Dorsolateral prefrontal cortex (tissue), 120 donors: ENCODE measurements at regions of chr17 and their contacts with region 1.

Region 1: GRCh38 chr17:21318439-21318838 is 33.9 kb downstream of the MAP2K3 start:
- DNase-seq: peak in 3 of 10 donors; percentile 33 to 45 (median 38)
- H3K4me3 ChIP-seq: no peak overlapping the region
- H3K27ac ChIP-seq: no peak overlapping the region
- H3K27me3 ChIP-seq: no peaks in the 10 kb centered on the region
- CTCF ChIP-seq: no peak

Region 2: DNA sequence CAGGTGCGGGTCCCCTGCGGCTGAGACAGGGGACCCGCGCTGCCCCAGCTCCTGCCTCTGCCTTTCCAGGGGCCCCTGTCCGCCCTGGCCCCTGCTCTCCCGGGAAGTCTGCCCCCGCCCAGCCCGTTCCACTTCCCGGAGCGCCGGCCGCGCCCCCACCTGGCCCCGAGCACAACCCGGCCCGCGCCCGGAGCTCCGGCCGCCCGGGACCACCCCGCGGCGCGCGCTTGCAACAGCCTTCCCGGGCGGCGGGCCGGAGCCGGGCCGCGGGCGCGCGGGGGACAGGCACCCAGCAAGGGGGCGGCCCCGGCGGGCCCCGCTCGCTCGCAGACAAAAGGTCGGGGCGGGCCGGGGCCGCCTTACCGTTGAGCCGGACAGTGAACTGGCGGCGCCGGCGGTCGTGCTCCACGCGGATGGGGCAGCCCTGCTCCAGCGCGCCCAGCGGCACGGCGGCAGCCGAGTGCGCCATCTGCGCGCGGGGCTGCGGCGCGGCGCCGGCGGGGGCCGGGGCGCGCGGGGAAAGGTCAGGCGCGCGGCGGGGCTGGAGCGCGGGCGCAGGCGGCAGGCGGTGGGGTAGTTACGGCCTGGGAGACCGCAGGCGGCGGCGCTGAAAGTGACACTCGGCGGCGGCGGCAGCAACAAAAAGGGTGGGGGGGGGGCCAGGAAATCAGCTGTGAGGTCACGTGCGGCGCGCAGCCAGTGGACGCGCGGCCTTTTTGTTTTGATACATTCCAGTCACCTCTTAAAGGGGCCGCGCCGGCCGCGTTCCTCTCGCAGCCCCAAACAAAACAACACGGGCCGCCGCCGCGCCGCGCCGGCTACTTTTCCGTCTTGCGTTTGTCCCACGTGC is 65.4 kb before region 1 on chr17 and contains the start of gene NATD1:
- intact Hi-C with region 1: no loop called
- DNase-seq: peak; percentile 78 to 92 (median 87)
- H3K4me3 ChIP-seq: peak within 1 kb of the TSS; percentile 50 to 85 (median 67)
- H3K27ac ChIP-seq: peak within 1 kb of the TSS in 54 of 59 donors; percentile 9 to 92 (median 76)
- H3K27me3 ChIP-seq: no peaks in the 10 kb centered on the region
- CTCF ChIP-seq: peak in 20 of 56 donors; percentile 7 to 56 (median 27)
- total RNA-seq, gene NATD1: 5.2 to 13.5 (median 7.6) TPM

Region 3: GRCh38 chr17:21284319-21285163 is 33.9 kb before region 1 on chr17 and contains the start of gene MAP2K3:
- intact Hi-C with region 1: loop called (anchors 2 to 5 kb)
- DNase-seq: peak; percentile 97 to 100 (median 100)
- H3K4me3 ChIP-seq: peak within 1 kb of the TSS; percentile 55 to 99 (median 91)
- H3K27ac ChIP-seq: peak within 1 kb of the TSS in 57 of 59 donors; percentile 11 to 94 (median 83)
- H3K27me3 ChIP-seq: no peaks in the 10 kb centered on the region
- CTCF ChIP-seq: peak in 16 of 56 donors; percentile 7 to 45 (median 30)
- total RNA-seq, gene MAP2K3: 9.6 to 38.2 (median 18.5) TPM

Region 4: DNA sequence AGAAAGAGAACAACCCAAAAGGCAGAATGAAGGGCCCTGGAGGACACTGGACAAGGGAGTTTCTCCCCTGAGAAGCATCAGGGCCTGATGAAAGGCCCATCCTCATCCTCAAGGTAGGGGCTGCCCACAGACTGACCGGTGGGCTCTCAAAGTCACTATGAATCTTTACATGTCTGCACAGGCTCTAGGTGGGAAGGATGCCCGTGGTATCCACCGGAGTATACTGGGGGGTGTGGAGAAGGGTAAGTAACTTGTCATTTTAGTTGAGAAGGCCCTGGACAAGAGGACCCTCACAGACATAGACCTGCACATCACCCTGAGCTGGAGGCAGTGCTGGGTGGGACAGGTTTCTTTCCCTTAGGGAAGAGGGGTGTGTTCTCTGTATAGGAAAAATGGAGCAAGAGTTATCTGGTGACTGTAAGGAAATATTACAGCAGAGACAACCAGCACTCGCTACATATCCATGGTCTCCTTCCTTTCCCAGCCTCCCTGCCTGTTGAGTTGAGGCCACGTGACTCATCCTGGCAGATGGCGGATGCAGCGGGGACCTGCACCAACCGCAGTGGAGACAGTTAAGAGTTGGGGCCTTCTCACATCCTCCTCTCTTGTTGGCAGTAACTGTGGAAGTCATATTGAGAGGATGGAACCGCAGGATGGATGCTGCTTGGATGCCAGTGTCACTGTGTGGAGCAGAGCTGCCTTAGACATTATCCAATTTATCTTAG is 12.2 kb after region 1 on chr17:
- intact Hi-C with region 1: no loop called
- DNase-seq: peak in 2 of 10 donors; percentile 12 to 32
- H3K4me3 ChIP-seq: no peak overlapping the region
- H3K27ac ChIP-seq: no peak overlapping the region
- H3K27me3 ChIP-seq: no peaks in the 10 kb centered on the region
- CTCF ChIP-seq: no peak

Region 5: DNA sequence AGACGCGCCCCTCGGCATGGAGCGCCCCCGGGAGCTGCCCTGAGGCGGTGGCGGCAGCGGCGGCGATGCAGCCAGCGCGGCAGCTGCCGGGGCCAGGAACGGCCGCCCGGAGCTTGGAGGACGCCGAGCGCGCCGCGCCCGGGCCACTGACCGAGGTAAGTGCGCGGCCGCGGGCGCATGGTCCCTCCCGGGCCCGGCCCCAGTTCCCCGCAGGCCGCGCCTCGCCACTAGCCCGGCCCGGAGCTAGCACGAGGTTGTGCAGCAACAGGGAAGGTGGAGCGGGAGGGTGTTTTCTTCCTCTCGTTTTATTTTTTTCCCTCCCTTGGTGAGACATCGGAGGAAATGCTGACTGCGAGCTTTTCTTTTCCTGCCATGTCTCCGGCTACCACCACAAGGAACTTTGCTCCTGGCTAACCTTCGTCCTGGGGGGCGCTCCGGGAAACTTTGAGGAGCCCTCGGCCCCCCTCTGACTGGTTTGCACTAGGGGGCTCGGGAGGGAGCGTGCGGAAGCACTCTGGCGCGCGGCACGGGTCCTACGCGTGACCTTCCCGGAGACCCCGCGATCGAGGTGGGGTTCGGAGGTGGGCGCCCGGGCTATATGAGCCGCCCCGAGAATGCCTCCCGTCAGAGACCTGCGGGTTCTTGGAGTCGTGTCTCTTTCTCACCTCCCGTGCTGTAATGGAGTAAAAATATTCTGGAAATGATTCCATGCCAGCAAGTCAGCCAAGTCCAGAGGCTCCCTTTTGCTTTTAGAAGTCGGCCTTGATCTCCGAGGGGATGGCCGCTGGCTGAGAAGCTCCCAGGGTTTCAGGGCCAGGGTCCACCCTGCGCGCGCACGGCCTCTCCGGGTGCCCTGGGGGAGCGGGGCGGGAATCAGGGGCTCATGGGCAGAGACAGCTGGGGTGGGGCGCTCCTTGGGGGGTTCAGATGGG is 58.6 kb after region 1 on chr17:
- intact Hi-C with region 1: loop called in 1 of 2 experiments (anchors 10 kb)
- DNase-seq: no peak
- H3K4me3 ChIP-seq: peak overlapping the region; percentile 25 to 71 (median 56)
- H3K27ac ChIP-seq: peak overlapping the region in 18 of 59 donors; percentile 7 to 88 (median 48)
- H3K27me3 ChIP-seq: peaks cover 0 to 50% (median 21%) of the 10 kb centered on the region in 45 donors
- CTCF ChIP-seq: no peak

Region 6: DNA sequence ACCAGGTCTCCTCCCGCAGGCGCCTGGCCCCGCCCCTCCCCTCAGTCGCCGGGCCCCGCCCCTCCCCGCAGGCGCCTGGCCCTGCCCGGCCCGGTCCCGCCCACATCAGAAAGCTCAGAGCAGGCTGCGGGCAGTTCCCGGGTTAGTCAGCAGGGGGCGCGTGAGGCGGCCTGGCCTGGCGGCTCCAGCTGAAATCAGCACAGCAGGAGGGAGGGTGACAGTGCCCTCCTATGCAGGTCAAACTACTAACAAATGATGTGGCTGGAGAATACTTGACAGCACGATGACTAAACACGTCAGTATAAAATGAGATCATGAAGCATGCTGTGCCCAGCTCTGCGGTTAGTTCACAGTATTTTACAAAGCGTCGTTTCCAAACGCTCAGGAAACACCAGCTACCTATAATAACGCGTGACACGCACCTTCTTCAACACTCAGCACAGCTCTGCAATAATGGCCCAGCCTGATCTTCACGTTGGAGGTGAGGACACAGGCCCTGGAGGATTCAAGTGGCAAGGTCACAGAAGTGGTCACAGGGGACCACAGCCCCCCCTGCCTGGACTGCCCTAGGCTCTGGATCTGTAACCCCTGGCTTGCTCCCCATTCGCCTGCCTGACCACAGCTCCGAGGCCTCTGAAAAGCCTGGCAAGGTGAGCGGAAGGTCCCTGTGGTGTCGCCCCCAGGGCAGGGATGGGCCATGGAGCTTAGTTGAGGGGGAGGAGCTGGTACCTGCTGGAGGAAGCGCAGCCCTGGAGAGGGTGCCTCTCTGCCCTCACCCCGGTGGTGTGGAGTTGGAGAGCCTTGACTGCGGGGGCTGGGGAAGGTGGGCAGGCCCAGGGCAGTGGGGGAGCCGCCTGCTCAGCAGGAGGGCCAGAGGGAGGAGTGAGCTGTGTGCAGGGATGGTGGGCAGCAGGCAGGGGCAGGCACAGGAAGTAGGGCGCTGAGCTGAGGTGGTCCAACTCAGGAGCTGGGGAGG is 138.9 kb after region 1 on chr17:
- intact Hi-C with region 1: loop called (anchors 10 kb)
- DNase-seq: peak; percentile 71 to 88 (median 80)
- H3K4me3 ChIP-seq: peak overlapping the region in 5 of 59 donors; percentile 1 to 12 (median 6)
- H3K27ac ChIP-seq: no peak overlapping the region
- H3K27me3 ChIP-seq: no peaks in the 10 kb centered on the region
- CTCF ChIP-seq: peak; percentile 67 to 97 (median 90)

Region 7: DNA sequence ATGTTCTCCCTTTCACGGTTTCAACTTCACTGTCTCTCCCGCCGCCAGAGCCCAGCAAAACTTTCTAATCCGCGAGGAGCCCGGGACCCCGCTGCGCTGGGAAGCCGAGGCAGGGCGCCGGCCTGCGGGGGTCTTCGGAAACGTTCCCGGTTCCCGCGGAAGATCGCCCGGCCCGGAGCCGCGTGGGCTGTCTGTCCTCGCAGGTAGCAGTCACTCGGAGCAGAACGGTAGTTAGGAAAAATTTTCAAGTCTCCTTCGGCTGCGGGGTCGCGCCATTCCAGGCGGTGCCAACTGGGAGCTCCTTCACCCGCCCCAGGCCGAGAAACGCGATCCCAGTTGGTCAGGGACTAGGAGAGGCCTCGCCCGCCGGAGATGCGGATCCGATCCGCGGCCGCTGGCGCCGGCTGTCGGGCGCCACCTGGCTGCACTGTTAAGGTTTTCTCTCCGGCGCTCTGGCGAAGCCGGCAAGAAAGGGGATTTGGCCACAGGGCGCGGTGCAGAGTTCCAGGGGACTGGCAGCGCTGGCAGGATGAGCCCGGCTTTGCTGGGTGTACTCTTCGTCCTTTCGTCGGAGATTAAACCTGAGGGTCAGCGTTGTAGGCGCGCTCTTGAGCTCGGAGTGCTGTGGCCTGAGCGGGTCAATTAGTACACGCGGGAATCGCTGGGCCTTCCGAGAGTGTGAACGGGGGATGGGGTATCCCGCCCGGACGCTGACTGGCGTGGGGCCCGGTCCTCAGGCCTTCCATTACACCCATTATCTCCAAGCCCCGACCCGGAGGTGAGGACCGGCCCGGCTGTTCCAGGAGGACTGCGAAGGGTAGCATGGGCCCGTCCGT is 193.1 kb after region 1 on chr17:
- intact Hi-C with region 1: loop called in 1 of 2 experiments (anchors 10 kb)
- DNase-seq: peak; percentile 69 to 89 (median 82)
- H3K4me3 ChIP-seq: peak overlapping the region; percentile 36 to 88 (median 67)
- H3K27ac ChIP-seq: peak overlapping the region in 34 of 59 donors; percentile 15 to 86 (median 50)
- H3K27me3 ChIP-seq: no peaks in the 10 kb centered on the region
- CTCF ChIP-seq: peak; percentile 46 to 97 (median 85)